ENCODE measurements at regions of chr17 and their contacts with region 1.

Region 1: GRCh38 chr17:17496189-17497064 is at the start of gene RASD1:
- DNase-seq: peak in 1 of 2 experiments; percentile 86
- H3K4me3 ChIP-seq: no peak within 1 kb of the TSS; the same call in 1 of the 2 replicates
- H3K27ac ChIP-seq: no peak within 1 kb of the TSS
- H3K4me1 ChIP-seq: no peaks in the 10 kb centered on the region; the same call in 1 of the 2 replicates
- H3K27me3 ChIP-seq: no peaks in the 10 kb centered on the region
- CTCF ChIP-seq: peak; percentile 88
- total RNA-seq, gene RASD1: 1.0 and 1.2 TPM in 2 replicates

Region 2: GRCh38 chr17:17356149-17356930 is 140.1 kb before region 1 on chr17:
- CTCF ChIA-PET with region 1: interaction called, 4 read pairs
- POLR2A ChIA-PET with region 1: no interaction called
- intact Hi-C with region 1: loop called (anchors 1 kb)
- DNase-seq: peak; percentile 65 to 82
- H3K4me3 ChIP-seq: no peak overlapping the region
- H3K27ac ChIP-seq: no peak overlapping the region
- H3K4me1 ChIP-seq: no peaks in the 10 kb centered on the region
- H3K27me3 ChIP-seq: peaks cover 22% of the 10 kb centered on the region
- CTCF ChIP-seq: peak; percentile 100

Region 3: GRCh38 chr17:17440010-17440843 is 56.2 kb before region 1 on chr17:
- CTCF ChIA-PET with region 1: no interaction called
- POLR2A ChIA-PET with region 1: no interaction called
- intact Hi-C with region 1: no loop called
- DNase-seq: peak in 1 of 2 experiments; percentile 21
- H3K4me3 ChIP-seq: no peak overlapping the region
- H3K27ac ChIP-seq: no peak overlapping the region
- H3K4me1 ChIP-seq: peaks cover 22% of the 10 kb centered on the region
- H3K27me3 ChIP-seq: peaks cover 20% of the 10 kb centered on the region; the same call in 1 of the 2 replicates
- CTCF ChIP-seq: peak; percentile 81

Region 4: GRCh38 chr17:17506811-17507464 is 10.5 kb after region 1 on chr17:
- CTCF ChIA-PET with region 1: interaction called, 13 read pairs
- POLR2A ChIA-PET with region 1: interaction called, 24 read pairs
- intact Hi-C with region 1: no loop called
- DNase-seq: no peak
- H3K4me3 ChIP-seq: no peak overlapping the region
- H3K27ac ChIP-seq: no peak overlapping the region
- H3K4me1 ChIP-seq: peaks cover 17% of the 10 kb centered on the region
- H3K27me3 ChIP-seq: no peaks in the 10 kb centered on the region
- CTCF ChIP-seq: no peak

Region 5: GRCh38 chr17:17568749-17569195 is 72.3 kb after region 1 on chr17:
- CTCF ChIA-PET with region 1: interaction called, 4 read pairs
- POLR2A ChIA-PET with region 1: no interaction called
- intact Hi-C with region 1: loop called (anchors 1 kb)
- DNase-seq: peak; percentile 49 to 81
- H3K4me3 ChIP-seq: no peak overlapping the region
- H3K27ac ChIP-seq: no peak overlapping the region
- H3K4me1 ChIP-seq: no peaks in the 10 kb centered on the region
- H3K27me3 ChIP-seq: no peaks in the 10 kb centered on the region
- CTCF ChIP-seq: peak; percentile 93

Region 6: DNA sequence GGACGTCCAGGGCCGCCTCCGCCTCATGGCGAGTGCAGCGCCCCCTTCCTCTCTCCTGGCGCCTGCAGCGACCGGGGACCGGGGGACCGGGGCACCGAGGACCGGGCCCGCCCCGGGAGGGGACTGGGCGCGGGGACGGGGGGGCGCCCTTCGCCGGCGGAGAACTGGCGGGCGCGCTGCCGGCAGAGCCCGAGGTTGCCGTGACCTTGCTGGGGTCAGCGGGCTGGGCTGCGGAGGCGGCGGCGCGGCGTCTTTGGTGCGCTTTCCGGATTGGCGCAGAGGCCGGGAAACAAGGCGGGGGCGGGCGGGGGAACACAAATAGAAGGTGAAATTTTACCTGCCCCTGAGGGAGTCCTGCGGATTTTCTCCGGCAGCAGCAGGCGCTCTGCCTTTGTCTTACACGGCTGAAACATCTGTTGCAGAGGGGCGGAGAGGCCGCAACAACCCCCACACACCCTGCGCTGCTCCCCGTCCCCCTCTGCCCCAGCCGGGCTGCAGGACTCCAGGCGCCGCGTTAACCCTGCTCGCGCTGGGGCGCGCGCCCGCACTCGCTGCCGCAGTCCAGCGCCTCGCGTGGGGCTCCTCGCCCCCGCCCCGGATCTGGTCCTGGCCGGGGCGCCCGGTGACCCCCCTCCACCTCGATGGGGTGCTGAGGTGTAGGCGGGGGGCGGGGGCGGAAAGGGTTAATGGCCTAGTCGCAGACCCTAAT is 286.8 kb after region 1 on chr17:
- CTCF ChIA-PET with region 1: no interaction called
- POLR2A ChIA-PET with region 1: interaction called, 10 read pairs
- intact Hi-C with region 1: no loop called
- DNase-seq: peak in 1 of 2 experiments; percentile 70
- H3K4me3 ChIP-seq: peak overlapping the region; percentile 31; the same call in 1 of the 2 replicates
- H3K27ac ChIP-seq: no peak overlapping the region
- H3K4me1 ChIP-seq: peaks cover 16% of the 10 kb centered on the region
- H3K27me3 ChIP-seq: no peaks in the 10 kb centered on the region
- CTCF ChIP-seq: no peak